Activated CD4-positive, alpha-beta T cell treated with anti-CD3 and anti-CD28 coated beads for 36 hours (primary cell): ENCODE measurements at regions of chr1 and their contacts with region 1.

Region 1: DNA sequence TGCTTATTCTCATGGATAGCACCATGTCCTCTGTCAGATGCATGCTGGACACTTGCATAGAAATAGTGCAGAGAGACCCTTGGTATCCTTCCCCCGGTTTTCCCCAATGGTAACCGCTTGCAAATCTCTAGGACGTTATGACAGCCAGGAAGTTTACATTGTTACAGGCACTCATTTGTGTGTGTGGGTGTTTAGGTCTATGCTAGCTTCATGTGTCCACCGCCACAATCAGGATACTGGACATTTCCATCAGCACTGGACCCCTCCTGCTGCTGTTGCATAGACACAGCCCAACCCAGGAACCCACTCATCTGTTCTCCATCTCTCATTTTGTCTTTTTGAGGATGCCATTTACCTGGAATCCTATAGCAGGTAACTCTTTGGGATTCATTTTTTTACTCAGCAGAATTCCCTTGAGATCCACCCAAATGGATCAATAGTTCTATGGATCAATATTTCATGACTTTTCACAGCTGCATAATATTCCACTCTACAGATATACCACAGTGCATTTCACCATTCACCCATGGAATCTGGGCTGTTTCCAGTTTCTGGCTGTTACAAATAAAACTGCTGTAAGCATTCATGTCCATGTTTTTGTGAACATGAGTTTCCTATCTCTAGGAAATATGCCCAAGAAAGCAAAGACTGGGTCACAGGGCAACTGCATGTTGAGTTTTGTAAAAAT is 6.6 kb upstream of the WNT9A start:
- DNase-seq: no peak
- ATAC-seq: no peak
- H3K4me3 Mint-ChIP-seq: no peak overlapping the region
- H3K27ac Mint-ChIP-seq: no peak overlapping the region
- H3K4me1 Mint-ChIP-seq: peaks cover 2% of the 10 kb centered on the region
- H3K27me3 Mint-ChIP-seq: peaks cover 33% of the 10 kb centered on the region

Region 2: GRCh38 chr1:227762233-227762911 is 191.9 kb before region 1 on chr1:
- CTCF ChIA-PET with region 1: interaction called, 10 read pairs
- POLR2A ChIA-PET with region 1: no interaction called
- intact Hi-C with region 1: loop called in 1 of 2 experiments (anchors 1 kb)
- DNase-seq: peak; percentile 93
- ATAC-seq: peak; percentile 72
- H3K4me3 Mint-ChIP-seq: no peak overlapping the region
- H3K27ac Mint-ChIP-seq: peak overlapping the region; percentile 8
- H3K4me1 Mint-ChIP-seq: peaks cover 90% of the 10 kb centered on the region
- H3K27me3 Mint-ChIP-seq: no peaks in the 10 kb centered on the region